SK-N-SH (cell line): ENCODE measurements at regions of chr22 and their contacts with region 1.

Region 1: GRCh38 chr22:42473484-42474193 is 41.4 kb upstream of the NFAM1 start:
- DNase-seq: peak; percentile 39
- H3K4me3 ChIP-seq: no peak overlapping the region
- H3K27ac ChIP-seq: no peak overlapping the region
- H3K4me1 ChIP-seq: no peaks in the 10 kb centered on the region
- H3K27me3 ChIP-seq: no peaks in the 10 kb centered on the region
- CTCF ChIP-seq: peak; percentile 55
- EP300 ChIP-seq: no peak
- RAD21 ChIP-seq: peak; percentile 61

Region 2: GRCh38 chr22:42462016-42462415 is 11.6 kb before region 1 on chr22:
- CTCF ChIA-PET with region 1: interaction called, 10 read pairs
- POLR2A ChIA-PET with region 1: interaction called, 3 read pairs
- DNase-seq: peak; percentile 58
- H3K4me3 ChIP-seq: no peak overlapping the region
- H3K27ac ChIP-seq: no peak overlapping the region
- H3K4me1 ChIP-seq: peaks cover 0 to 8% of the 10 kb centered on the region in 2 experiments; a peak in 1 of 4 replicates
- H3K27me3 ChIP-seq: no peaks in the 10 kb centered on the region
- CTCF ChIP-seq: no peak
- EP300 ChIP-seq: no peak
- RAD21 ChIP-seq: no peak